Transverse colon (tissue), 4 donors: ENCODE measurements at regions of chr3 and their contacts with region 1.

Region 1: DNA sequence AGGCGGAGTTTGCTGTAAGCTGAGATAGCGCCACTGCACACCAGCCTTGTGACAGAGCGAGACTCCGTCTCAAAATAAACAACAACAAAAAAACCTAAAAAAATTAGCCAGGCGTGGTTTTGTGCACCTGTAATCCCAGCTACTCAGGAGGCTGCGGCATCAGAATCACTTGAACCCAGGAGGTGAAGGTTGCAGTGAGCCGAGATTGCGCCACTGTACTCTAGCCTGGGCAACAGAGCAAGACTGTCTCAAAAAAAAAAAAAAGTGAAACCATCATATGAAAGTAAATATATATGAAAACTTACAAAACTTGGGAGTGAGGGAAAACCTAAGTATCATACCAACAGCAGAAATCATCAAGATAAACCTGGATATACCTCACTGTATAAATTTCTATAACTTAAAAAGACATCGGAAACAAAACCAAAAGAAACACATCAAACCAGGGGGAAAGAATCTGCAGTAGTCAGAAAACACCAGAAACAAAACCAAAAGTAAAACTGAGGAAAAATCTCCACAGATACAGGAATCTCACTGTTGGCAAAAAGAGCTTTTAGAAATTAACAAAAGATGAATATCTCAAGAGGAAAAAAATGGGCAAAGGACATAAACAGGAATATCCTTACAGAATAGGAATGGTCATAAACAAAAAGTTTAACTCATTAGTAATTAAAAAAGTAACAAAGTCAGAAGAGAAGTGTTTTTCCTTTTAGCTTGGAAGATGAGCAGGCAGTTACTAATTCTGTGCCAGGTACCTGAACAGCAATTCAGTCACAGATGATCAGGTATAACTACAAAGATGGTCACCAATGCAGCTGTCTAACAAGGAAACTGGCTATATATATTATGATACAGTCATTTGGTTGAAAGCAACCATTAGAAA is 41.3 kb downstream of the ETV5 start:
- DNase-seq: no peak
- H3K4me3 ChIP-seq: no peak overlapping the region
- H3K27ac ChIP-seq: no peak overlapping the region
- H3K4me1 ChIP-seq: no peaks in the 10 kb centered on the region
- H3K27me3 ChIP-seq: no peaks in the 10 kb centered on the region
- CTCF ChIP-seq: no peak
- EP300 ChIP-seq: no peak
- POLR2A ChIP-seq: no peak

Region 2: DNA sequence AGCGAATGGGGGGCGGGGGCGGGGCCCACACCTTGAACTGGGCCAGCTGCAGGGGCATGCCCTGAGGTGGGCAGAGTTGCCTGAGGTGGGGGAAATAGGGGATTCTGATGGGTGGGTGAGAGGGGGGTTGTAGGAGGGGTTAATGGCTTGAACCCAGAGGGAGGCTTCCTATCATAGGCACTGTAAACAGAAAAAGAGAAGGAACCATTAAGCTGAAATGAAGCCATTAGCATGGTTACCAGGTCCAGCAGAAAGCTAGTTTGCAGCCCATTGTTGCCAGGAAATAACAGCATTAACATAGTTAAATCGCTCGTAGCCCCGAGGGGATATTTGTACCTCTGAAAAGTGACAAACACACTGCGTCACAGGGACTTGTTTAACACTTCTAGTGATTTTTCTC is 12.3 kb after region 1 on chr3:
- in situ Hi-C with region 1: no loop called
- intact Hi-C with region 1: loop called (anchors 1 kb)
- DNase-seq: no peak
- H3K4me3 ChIP-seq: no peak overlapping the region
- H3K27ac ChIP-seq: no peak overlapping the region
- H3K4me1 ChIP-seq: no peaks in the 10 kb centered on the region
- H3K27me3 ChIP-seq: no peaks in the 10 kb centered on the region
- CTCF ChIP-seq: no peak
- EP300 ChIP-seq: no peak
- POLR2A ChIP-seq: no peak

Region 3: DNA sequence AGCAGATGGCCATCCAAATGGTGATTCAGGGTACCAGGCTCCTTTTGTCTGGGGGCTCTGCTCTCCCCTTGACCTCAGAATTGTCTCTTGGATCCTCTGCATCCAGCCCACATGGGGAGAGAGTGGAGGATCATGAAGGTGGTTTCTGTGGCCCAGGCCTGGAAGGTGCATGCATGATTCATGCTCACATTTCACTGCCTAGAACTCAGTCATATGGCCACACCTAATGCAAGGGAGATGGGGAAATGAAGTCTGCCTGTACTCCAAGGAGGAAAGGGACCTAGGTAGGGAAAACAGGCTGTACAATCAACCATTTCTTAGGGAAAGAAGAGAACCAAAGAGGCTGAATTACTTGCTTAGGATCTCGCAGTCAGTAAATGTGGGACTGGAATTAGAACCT is 613.3 kb after region 1 on chr3:
- in situ Hi-C with region 1: no loop called
- intact Hi-C with region 1: no loop called
- DNase-seq: no peak
- H3K4me3 ChIP-seq: no peak overlapping the region
- H3K27ac ChIP-seq: no peak overlapping the region
- H3K4me1 ChIP-seq: no peaks in the 10 kb centered on the region
- H3K27me3 ChIP-seq: peaks cover 7% of the 10 kb centered on the region
- CTCF ChIP-seq: no peak
- EP300 ChIP-seq: no peak
- POLR2A ChIP-seq: no peak